Dendritic cell treated with granulocyte-macrophage colony-stimulating factor and Interleukin-4, amounts not matched to agents 40 ng/mL and 50 ng/mL, for 4 days (primary cell): ENCODE measurements at regions of chrX and their contacts with region 1.

Region 1: DNA sequence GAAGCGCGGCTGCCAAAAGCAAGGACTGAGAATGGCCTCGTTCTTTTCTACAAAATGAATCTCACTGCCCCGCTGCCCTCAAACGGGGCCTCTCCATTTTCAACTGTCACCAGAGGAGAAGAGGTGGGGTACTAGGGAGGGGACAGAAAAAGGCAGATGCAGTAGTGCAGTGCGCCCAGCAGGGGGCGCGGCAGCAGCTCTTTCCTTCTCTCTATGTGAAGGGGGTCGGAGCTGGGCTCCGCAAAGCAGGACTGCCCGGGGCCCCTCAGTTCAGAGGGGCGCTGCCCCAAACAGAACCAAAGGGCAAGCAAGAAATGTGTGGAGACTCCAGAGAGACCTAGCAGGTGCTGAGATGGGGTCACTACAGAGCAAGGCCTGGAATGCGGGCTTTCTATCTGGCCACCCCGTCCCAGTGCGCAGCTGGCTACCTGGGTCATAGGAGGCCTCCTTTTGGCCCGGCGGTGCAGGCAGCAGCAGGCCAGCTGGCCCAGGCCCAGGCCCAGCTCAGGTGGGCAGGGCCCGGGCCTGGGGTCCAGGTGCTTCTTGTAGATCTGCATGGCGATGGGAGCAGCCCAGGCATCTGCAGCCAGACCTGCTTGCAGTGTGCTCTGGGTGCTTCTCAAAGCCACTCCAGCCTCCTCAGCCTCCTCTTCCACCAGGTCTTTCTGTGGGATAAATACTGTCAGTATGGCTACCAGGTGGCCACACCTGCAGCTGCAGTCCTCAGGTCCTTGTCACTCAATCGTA is 5.9 kb downstream of the IRAK1 start:
- H3K4me3 Mint-ChIP-seq: no peak overlapping the region
- H3K27ac Mint-ChIP-seq: no peak overlapping the region
- H3K4me1 Mint-ChIP-seq: peaks cover 41% of the 10 kb centered on the region
- H3K27me3 Mint-ChIP-seq: no peaks in the 10 kb centered on the region

Region 2: DNA sequence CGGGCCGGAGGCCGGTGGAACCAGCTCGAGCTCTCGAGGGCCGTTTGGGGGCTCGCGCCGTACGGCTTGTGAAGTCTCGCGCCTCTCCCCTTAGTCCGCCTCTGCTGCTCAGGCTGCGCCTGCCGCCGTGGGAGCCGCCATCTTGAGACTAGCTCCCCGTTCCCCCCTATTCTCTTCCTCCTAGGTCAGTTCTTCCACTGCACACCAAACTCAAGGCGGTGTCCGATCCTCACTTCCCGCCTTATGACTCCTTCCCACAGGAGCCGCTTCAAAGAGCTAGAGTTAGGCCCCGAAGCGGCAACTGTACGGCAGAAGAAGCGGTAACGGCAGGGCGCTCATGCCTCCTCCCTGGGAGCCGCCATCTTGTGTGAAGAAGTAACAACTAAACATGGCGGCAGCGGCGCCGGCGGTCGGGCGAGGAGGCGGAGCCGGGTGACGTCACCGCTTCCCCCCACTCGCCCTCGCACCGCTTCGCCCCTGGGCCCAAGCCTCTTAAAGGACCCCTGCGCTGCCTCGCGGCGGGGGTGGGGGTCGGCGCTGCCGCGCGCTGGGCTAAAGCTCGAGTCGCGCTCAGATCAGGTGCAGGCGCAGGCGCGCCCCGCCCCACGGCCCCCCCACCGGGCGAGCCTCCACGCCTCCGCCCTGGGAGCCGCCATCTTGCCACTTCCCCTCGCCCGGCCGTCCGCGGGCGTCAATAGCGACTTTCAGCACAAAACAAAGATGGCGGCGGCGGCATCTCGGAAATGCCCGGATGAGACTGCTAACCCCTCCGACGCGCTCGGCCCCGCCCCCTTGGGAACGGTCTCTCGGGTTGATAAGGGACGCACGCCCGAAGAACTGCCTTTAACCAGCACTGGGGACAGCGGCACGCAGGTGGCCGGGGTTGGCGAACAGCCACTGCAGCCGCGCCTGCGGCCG is 42.1 kb before region 1 on chrX and contains the start of gene HCFC1:
- intact Hi-C with region 1: loop called (anchors 5 kb)
- H3K4me3 Mint-ChIP-seq: peak within 1 kb of the TSS; percentile 100
- H3K27ac Mint-ChIP-seq: peak within 1 kb of the TSS; percentile 99
- H3K4me1 Mint-ChIP-seq: peaks cover 49% of the 10 kb centered on the region
- H3K27me3 Mint-ChIP-seq: no peaks in the 10 kb centered on the region

Region 3: DNA sequence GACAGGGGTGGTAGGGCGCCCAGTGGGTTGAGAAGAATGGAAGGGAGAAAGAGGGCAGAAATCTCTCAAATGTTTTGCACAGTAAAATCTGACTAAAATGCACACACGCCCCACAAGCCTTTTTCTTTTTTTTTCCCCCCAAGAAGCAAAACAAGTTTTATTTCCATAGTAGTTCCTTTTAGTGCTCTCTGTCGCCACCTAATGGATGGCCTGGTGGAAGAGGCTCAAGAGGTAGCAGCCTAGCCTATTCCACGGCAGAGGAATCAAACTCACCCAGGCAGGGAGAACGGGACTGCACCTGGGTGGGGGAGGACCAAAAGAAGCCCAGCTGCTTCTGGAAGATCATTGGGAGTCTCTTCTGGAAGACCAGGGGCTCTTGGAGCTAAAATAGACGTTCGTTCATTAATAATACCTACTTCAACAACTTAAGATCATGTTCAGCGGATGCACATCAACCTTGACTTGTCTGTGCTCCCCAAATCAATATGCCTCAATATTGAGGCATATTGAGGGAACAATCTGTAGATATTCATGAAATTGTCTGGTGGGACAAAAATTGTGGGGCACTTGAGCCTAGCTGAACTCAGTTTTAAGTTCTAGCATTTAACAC is 37.5 kb after region 1 on chrX:
- intact Hi-C with region 1: loop called (anchors 5 kb)
- H3K4me3 Mint-ChIP-seq: no peak overlapping the region
- H3K27ac Mint-ChIP-seq: peak overlapping the region; percentile 25
- H3K4me1 Mint-ChIP-seq: peaks cover 33% of the 10 kb centered on the region
- H3K27me3 Mint-ChIP-seq: no peaks in the 10 kb centered on the region

Region 4: GRCh38 chrX:154091678-154092077 is 77.9 kb after region 1 on chrX:
- intact Hi-C with region 1: no loop called
- H3K4me3 Mint-ChIP-seq: no peak overlapping the region
- H3K27ac Mint-ChIP-seq: no peak overlapping the region
- H3K4me1 Mint-ChIP-seq: peaks cover 27% of the 10 kb centered on the region
- H3K27me3 Mint-ChIP-seq: no peaks in the 10 kb centered on the region